ENCODE measurements at regions of chr20 and their contacts with region 1.

Region 1: GRCh38 chr20:9609887-9610502 is 95.6 kb downstream of the LAMP5 start:
- DNase-seq: peak; percentile 79
- H3K4me3 ChIP-seq: no peak overlapping the region
- H3K27ac ChIP-seq: no peak overlapping the region
- H3K4me1 ChIP-seq: no peaks in the 10 kb centered on the region
- H3K27me3 ChIP-seq: no peaks in the 10 kb centered on the region
- CTCF ChIP-seq: peak; percentile 77

Region 2: GRCh38 chr20:9407805-9408421 is 202.1 kb before region 1 on chr20:
- CTCF ChIA-PET with region 1: interaction called, 57 read pairs
- POLR2A ChIA-PET with region 1: no interaction called
- intact Hi-C with region 1: loop called (anchors 1 kb)
- DNase-seq: peak; percentile 67
- H3K4me3 ChIP-seq: no peak overlapping the region
- H3K27ac ChIP-seq: no peak overlapping the region
- H3K4me1 ChIP-seq: no peaks in the 10 kb centered on the region
- H3K27me3 ChIP-seq: no peaks in the 10 kb centered on the region
- CTCF ChIP-seq: peak; percentile 86

Region 3: DNA sequence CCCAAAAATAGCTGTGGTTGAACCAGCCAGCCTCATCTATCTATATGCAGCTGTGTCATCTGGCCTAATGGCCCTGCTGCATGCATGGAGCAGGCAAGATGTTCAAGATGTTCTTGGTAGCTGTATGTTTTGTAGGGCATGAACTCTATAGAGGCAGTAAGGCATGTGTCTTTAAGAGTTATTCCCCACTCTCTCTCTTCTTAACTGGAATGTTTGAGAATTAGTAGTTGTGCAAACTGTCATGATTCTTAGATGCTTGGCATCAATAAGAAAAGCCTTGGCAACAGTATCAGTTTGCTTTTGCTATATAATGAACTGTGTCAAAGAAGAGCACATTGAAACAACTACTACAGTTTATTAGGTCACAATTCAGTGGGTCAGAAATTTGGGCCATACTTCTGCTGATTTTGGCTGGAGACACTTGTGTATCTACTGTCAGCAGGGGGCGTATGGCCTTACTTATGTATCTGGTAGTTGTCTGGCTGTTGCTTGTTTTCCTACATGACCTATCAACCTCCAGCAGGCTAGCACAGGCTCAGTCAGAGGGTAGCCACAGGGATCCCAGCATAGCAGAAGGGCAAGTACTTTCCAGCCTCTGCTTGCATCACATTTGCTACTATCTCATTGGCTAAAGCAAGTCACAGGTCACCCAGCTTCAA is 151.7 kb before region 1 on chr20:
- CTCF ChIA-PET with region 1: interaction called, 9 read pairs
- POLR2A ChIA-PET with region 1: no interaction called
- intact Hi-C with region 1: loop called (anchors 2 kb)
- DNase-seq: peak; percentile 26
- H3K4me3 ChIP-seq: no peak overlapping the region
- H3K27ac ChIP-seq: no peak overlapping the region
- H3K4me1 ChIP-seq: no peaks in the 10 kb centered on the region
- H3K27me3 ChIP-seq: no peaks in the 10 kb centered on the region
- CTCF ChIP-seq: peak; percentile 59

Region 4: DNA sequence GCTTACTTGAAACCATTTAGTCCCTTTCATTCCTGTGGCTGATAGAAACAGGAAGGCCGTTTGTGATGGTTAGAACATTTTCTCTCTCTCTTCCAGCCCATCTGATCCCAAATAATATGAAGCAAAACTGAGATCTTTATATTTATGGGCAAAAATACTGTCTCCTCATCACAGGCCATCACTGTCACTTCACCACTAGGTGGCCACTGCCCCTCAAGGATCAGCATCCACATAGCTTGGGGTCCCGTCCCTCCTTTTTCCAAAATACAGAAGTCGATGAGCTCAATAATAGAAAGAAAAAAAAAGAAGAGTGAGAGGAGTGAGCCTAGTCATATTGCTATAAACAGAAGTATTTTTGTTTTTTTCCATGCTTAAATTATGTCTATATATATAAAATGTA is 142.0 kb before region 1 on chr20:
- CTCF ChIA-PET with region 1: interaction called, 26 read pairs
- POLR2A ChIA-PET with region 1: no interaction called
- intact Hi-C with region 1: loop called (anchors 1 kb)
- DNase-seq: peak; percentile 25
- H3K4me3 ChIP-seq: no peak overlapping the region
- H3K27ac ChIP-seq: no peak overlapping the region
- H3K4me1 ChIP-seq: no peaks in the 10 kb centered on the region
- H3K27me3 ChIP-seq: no peaks in the 10 kb centered on the region
- CTCF ChIP-seq: peak; percentile 80

Region 5: GRCh38 chr20:9503526-9504245 is 106.3 kb before region 1 on chr20:
- CTCF ChIA-PET with region 1: interaction called, 11 read pairs
- POLR2A ChIA-PET with region 1: no interaction called
- intact Hi-C with region 1: no loop called
- DNase-seq: peak; percentile 17
- H3K4me3 ChIP-seq: no peak overlapping the region
- H3K27ac ChIP-seq: no peak overlapping the region
- H3K4me1 ChIP-seq: no peaks in the 10 kb centered on the region
- H3K27me3 ChIP-seq: peaks cover 14% of the 10 kb centered on the region
- CTCF ChIP-seq: peak; percentile 60

Region 6: DNA sequence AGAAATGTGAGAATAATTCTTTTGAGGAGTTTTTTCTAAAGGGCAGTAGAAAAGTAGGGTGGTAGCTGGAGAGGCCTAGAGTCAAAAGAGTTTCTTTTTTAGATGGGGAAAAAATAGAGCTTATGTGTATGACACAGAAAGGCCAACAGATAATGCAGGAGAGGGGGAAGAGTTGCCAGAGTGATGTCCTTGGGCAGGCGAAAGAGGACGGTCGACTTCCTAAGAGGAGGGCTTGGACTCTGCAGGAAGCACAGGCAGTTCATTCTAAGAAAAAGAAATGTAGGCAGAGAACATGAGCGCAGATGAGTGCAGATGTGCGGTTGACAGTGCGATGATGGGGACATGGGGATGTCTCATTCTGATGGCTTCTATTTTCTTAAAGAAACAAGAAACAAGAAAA is 160.0 kb after region 1 on chr20:
- CTCF ChIA-PET with region 1: no interaction called
- POLR2A ChIA-PET with region 1: no interaction called
- intact Hi-C with region 1: no loop called
- DNase-seq: no peak
- H3K4me3 ChIP-seq: no peak overlapping the region
- H3K27ac ChIP-seq: no peak overlapping the region
- H3K4me1 ChIP-seq: no peaks in the 10 kb centered on the region
- H3K27me3 ChIP-seq: no peaks in the 10 kb centered on the region
- CTCF ChIP-seq: no peak

Measured in A673 (cell line).